ENCODE measurements at regions of chr2 and their contacts with region 1.

Region 1: GRCh38 chr2:10043906-10044601 is 704 bp downstream of the KLF11 start:
- DNase-seq: peak; percentile 92
- H3K4me3 ChIP-seq: peak overlapping the region in 2 of 3 experiments; percentile 31 to 75
- H3K27ac ChIP-seq: peak overlapping the region; percentile 70
- H3K4me1 ChIP-seq: peaks cover 4% of the 10 kb centered on the region
- H3K27me3 ChIP-seq: no peaks in the 10 kb centered on the region
- CTCF ChIP-seq: no peak
- POLR2A ChIP-seq: no peak

Region 2: DNA sequence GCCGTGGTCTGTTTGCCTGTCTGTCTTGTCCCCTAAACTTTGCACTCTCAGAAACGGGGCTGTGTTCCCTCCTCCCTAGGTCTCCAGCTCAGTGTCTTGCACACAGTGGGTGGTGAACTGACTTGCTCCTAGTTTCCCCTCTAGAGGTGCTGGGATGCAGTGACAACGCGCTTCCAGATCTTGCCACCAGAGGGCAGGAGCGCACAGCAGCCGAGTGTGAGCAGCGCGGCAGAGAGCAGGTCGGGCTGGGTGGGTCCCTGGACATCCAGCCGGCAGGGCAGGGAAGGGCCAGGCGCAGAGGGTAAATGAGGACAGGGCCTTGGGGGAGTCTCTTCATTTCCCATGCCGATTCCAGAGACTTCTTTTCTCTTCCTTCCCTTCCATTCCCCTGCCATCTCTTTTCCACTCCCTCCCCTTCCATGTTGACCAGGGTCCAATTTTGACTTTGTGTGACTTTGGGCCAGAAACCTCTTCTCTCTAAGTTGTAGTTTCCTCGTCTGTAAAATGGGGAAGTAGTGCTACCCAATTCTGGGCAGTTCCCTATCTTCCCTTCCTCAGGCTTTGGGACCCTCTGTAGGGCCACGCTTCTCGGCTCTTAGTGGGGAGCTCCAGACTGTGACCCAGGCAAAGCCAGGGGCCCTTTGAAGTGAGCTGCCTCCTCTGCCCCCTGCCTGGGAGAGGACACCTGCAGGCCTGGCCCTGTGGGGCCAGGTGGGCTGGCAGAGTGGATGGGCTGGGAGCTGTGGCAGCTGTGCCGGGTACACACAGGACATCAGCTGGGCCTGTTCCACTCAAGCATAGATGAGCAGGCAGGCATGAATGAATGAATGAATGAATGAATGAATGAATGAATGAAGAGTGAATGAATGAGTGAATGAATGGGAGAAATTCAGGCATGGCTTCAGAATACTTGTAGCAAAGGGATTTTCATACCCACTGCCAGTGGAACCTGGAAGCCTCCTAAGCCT is 244.1 kb before region 1 on chr2:
- CTCF ChIA-PET with region 1: interaction called, 62 read pairs
- POLR2A ChIA-PET with region 1: no interaction called
- dilution Hi-C with region 1: loop called (anchors 10 kb)
- intact Hi-C with region 1: loop called (anchors 1 kb)
- DNase-seq: peak; percentile 82
- H3K4me3 ChIP-seq: no peak overlapping the region
- H3K27ac ChIP-seq: no peak overlapping the region
- H3K4me1 ChIP-seq: no peaks in the 10 kb centered on the region
- H3K27me3 ChIP-seq: no peaks in the 10 kb centered on the region
- CTCF ChIP-seq: peak; percentile 96 to 99
- POLR2A ChIP-seq: no peak

Region 3: GRCh38 chr2:9843229-9844035 is 200.6 kb before region 1 on chr2 and contains the start of gene TAF1B:
- CTCF ChIA-PET with region 1: interaction called, 3 read pairs
- POLR2A ChIA-PET with region 1: no interaction called
- dilution Hi-C with region 1: no loop called
- intact Hi-C with region 1: loop called (anchors 1 kb)
- DNase-seq: peak; percentile 96
- H3K4me3 ChIP-seq: peak within 1 kb of the TSS; percentile 56 to 86 (median 84)
- H3K27ac ChIP-seq: peak within 1 kb of the TSS; percentile 78
- H3K4me1 ChIP-seq: peaks cover 28% of the 10 kb centered on the region
- H3K27me3 ChIP-seq: no peaks in the 10 kb centered on the region
- CTCF ChIP-seq: peak in 1 of 2 donors; percentile 42
- POLR2A ChIP-seq: peak; percentile 80
- total RNA-seq, gene TAF1B: 20.1 and 29.4 TPM in 2 replicates

Region 4: GRCh38 chr2:9857814-9858729 is 186.0 kb before region 1 on chr2:
- CTCF ChIA-PET with region 1: no interaction called
- POLR2A ChIA-PET with region 1: no interaction called
- dilution Hi-C with region 1: no loop called
- intact Hi-C with region 1: no loop called
- DNase-seq: no peak
- H3K4me3 ChIP-seq: no peak overlapping the region
- H3K27ac ChIP-seq: no peak overlapping the region
- H3K4me1 ChIP-seq: no peaks in the 10 kb centered on the region
- H3K27me3 ChIP-seq: no peaks in the 10 kb centered on the region
- CTCF ChIP-seq: no peak
- POLR2A ChIP-seq: no peak

Region 5: DNA sequence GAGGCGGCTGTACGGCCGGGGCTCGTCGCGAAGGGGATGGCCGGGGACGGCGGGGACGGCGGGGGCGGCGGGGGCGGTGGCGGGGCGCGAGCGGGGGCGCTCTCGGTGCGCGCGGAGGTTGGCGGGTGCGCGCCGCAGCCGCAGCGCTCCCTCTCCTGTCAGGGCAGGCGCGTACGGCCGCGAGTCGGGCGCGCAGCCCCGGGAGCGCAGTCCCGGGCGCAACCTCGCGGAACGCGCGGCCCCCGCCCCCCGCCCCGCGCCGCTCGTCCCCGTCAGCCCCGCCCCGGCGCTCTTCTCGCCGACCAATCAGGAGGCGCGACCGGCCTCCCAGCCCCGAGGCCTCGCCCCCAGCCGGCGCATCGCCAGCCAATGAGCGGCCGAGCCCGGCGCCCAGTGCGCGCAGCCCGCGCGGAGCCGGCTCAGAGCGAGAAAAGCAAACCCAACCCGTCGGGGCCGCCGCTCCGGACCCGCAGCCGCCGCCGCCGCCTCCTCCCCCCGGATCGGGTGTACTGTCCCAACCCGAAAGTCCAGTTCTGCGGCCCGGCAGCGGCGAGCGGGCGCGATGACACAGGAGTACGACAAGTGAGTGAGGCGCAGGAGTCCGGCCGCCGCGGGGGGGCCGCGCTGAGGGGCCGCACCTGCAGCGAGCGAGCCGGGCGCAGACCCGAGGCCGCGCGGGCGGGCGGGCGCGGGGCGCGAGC is 92.6 kb before region 1 on chr2 and contains the start of gene GRHL1:
- CTCF ChIA-PET with region 1: interaction called, 3 read pairs
- POLR2A ChIA-PET with region 1: no interaction called
- dilution Hi-C with region 1: no loop called
- intact Hi-C with region 1: loop called (anchors 1 kb)
- DNase-seq: peak; percentile 92
- H3K4me3 ChIP-seq: peak within 1 kb of the TSS; percentile 58 to 67 (median 59)
- H3K27ac ChIP-seq: no peak within 1 kb of the TSS
- H3K4me1 ChIP-seq: peaks cover 4% of the 10 kb centered on the region
- H3K27me3 ChIP-seq: no peaks in the 10 kb centered on the region
- CTCF ChIP-seq: no peak
- POLR2A ChIP-seq: no peak
- total RNA-seq, gene GRHL1: 0.85 and 1.1 TPM in 2 replicates

Region 6: DNA sequence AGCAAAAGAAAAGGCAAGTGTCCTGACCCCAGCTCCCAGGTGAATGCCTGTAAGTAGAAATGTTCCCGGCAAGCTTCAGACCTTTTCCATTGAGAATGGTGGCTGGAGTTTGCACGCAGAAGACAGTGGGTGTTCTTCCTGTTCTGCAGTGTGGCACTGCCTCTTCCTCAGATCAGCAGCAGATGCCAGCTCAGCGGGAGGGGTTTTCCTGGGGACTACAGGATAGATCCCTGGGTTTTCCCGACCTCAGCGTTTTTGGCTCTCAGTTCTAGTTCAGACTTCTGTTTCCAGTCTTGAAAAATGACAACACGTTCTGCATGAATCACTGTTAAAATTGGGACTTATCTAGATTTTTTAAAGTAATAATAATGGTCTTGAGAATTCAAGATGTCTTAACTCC is 53.3 kb before region 1 on chr2:
- CTCF ChIA-PET with region 1: interaction called, 340 read pairs
- POLR2A ChIA-PET with region 1: no interaction called
- dilution Hi-C with region 1: no loop called
- intact Hi-C with region 1: no loop called
- DNase-seq: peak; percentile 26
- H3K4me3 ChIP-seq: no peak overlapping the region
- H3K27ac ChIP-seq: no peak overlapping the region
- H3K4me1 ChIP-seq: peaks cover 46% of the 10 kb centered on the region
- H3K27me3 ChIP-seq: no peaks in the 10 kb centered on the region
- CTCF ChIP-seq: no peak
- POLR2A ChIP-seq: no peak

Region 7: DNA sequence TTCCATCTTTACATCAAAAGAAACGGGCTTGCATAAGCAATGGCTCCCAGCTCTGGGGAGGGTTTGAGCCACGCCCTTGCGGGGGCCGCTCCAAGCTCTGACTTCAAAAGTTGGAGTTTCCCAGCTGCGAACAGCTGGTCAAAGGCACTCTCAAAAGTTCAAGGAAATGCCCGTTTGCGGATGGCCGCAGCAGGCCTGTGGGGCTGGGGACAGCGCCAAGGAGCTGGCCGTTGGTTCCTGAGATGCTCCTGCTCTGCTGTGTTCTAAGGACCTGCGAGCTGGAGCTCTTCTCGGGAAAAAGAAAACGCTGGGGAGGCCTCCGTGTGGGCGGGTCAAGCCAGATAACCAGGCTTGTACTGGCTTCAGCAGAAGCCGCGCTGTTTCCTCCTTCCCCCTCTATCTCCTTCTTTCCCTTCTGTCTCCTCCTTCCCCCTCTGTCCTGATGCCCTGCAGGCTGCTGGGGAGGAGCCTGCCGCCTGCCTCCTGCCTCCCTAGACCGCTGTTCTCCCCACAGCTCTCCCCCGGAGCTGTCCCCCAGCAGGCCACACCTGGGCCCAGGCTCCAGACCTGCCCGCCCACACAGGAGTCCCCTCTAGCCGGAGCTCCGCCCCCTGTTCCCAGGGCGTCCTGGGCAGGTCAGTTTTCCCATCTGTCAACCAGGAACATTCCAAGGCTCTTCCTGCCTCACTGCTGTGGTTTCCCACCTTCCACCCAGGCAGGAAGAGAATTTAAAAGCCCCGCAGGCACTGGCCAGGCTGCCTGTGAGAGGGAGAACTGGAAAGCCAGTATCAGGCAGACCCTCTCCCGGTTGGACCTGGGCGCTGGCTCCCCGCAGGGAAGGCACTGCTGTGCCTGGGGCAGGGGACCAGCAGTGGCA is 13.4 kb after region 1 on chr2:
- CTCF ChIA-PET with region 1: interaction called, 14 read pairs
- POLR2A ChIA-PET with region 1: no interaction called
- dilution Hi-C with region 1: no loop called
- intact Hi-C with region 1: no loop called
- DNase-seq: peak; percentile 31
- H3K4me3 ChIP-seq: no peak overlapping the region
- H3K27ac ChIP-seq: no peak overlapping the region
- H3K4me1 ChIP-seq: peaks cover 4% of the 10 kb centered on the region
- H3K27me3 ChIP-seq: no peaks in the 10 kb centered on the region
- CTCF ChIP-seq: no peak
- POLR2A ChIP-seq: no peak

Region 8: GRCh38 chr2:10079234-10079869 is 35.3 kb after region 1 on chr2:
- CTCF ChIA-PET with region 1: no interaction called
- POLR2A ChIA-PET with region 1: no interaction called
- dilution Hi-C with region 1: no loop called
- intact Hi-C with region 1: no loop called
- DNase-seq: no peak
- H3K4me3 ChIP-seq: peak overlapping the region in 1 of 3 experiments; percentile 36
- H3K27ac ChIP-seq: no peak overlapping the region
- H3K4me1 ChIP-seq: no peaks in the 10 kb centered on the region
- H3K27me3 ChIP-seq: peaks cover 47 to 59% of the 10 kb centered on the region in 2 experiments
- CTCF ChIP-seq: no peak
- POLR2A ChIP-seq: no peak

Region 9: GRCh38 chr2:10097352-10098148 is 53.5 kb after region 1 on chr2:
- CTCF ChIA-PET with region 1: interaction called, 11 read pairs
- POLR2A ChIA-PET with region 1: no interaction called
- dilution Hi-C with region 1: no loop called
- intact Hi-C with region 1: no loop called
- DNase-seq: peak; percentile 54
- H3K4me3 ChIP-seq: no peak overlapping the region
- H3K27ac ChIP-seq: no peak overlapping the region
- H3K4me1 ChIP-seq: no peaks in the 10 kb centered on the region
- H3K27me3 ChIP-seq: peaks cover 0 to 1% of the 10 kb centered on the region in 2 experiments
- CTCF ChIP-seq: peak; percentile 87 to 95
- POLR2A ChIP-seq: no peak